PC-9 (cell line): ENCODE measurements at regions of chr4 and their contacts with region 1.

Region 1: GRCh38 chr4:25993395-25994185 is 79.6 kb downstream of the SMIM20 start:
- DNase-seq: no peak
- H3K4me3 ChIP-seq: no peak overlapping the region
- H3K27ac ChIP-seq: no peak overlapping the region
- H3K4me1 ChIP-seq: no peaks in the 10 kb centered on the region
- H3K27me3 ChIP-seq: no peaks in the 10 kb centered on the region
- CTCF ChIP-seq: peak; percentile 22; the same call in 1 of the 2 replicates

Region 2: GRCh38 chr4:25439918-25440477 is 553.6 kb before region 1 on chr4:
- CTCF ChIA-PET with region 1: no interaction called
- POLR2A ChIA-PET with region 1: no interaction called
- intact Hi-C with region 1: loop called (anchors 2 kb)
- DNase-seq: peak in 1 of 2 experiments; percentile 45
- H3K4me3 ChIP-seq: no peak overlapping the region
- H3K27ac ChIP-seq: no peak overlapping the region
- H3K4me1 ChIP-seq: no peaks in the 10 kb centered on the region
- H3K27me3 ChIP-seq: no peaks in the 10 kb centered on the region
- CTCF ChIP-seq: peak; percentile 87

Region 3: GRCh38 chr4:25531272-25531671 is 462.3 kb before region 1 on chr4:
- CTCF ChIA-PET with region 1: no interaction called
- POLR2A ChIA-PET with region 1: no interaction called
- intact Hi-C with region 1: no loop called
- DNase-seq: no peak
- H3K4me3 ChIP-seq: no peak overlapping the region
- H3K27ac ChIP-seq: no peak overlapping the region
- H3K4me1 ChIP-seq: no peaks in the 10 kb centered on the region
- H3K27me3 ChIP-seq: no peaks in the 10 kb centered on the region
- CTCF ChIP-seq: peak; percentile 63

Region 4: GRCh38 chr4:25563071-25563564 is 430.5 kb before region 1 on chr4:
- CTCF ChIA-PET with region 1: no interaction called
- POLR2A ChIA-PET with region 1: no interaction called
- intact Hi-C with region 1: no loop called
- DNase-seq: peak in 1 of 2 experiments; percentile 44
- H3K4me3 ChIP-seq: no peak overlapping the region
- H3K27ac ChIP-seq: no peak overlapping the region
- H3K4me1 ChIP-seq: no peaks in the 10 kb centered on the region
- H3K27me3 ChIP-seq: no peaks in the 10 kb centered on the region
- CTCF ChIP-seq: no peak

Region 5: GRCh38 chr4:26061248-26061986 is 67.8 kb after region 1 on chr4:
- CTCF ChIA-PET with region 1: no interaction called
- POLR2A ChIA-PET with region 1: no interaction called
- intact Hi-C with region 1: loop called (anchors 1 kb)
- DNase-seq: peak; percentile 31 to 41
- H3K4me3 ChIP-seq: no peak overlapping the region
- H3K27ac ChIP-seq: no peak overlapping the region
- H3K4me1 ChIP-seq: no peaks in the 10 kb centered on the region
- H3K27me3 ChIP-seq: no peaks in the 10 kb centered on the region
- CTCF ChIP-seq: peak; percentile 73

Region 6: GRCh38 chr4:26191353-26191752 is 197.8 kb after region 1 on chr4:
- CTCF ChIA-PET with region 1: no interaction called
- POLR2A ChIA-PET with region 1: interaction called, 12 read pairs
- intact Hi-C with region 1: no loop called
- DNase-seq: no peak
- H3K4me3 ChIP-seq: no peak overlapping the region
- H3K27ac ChIP-seq: no peak overlapping the region
- H3K4me1 ChIP-seq: peaks cover 4% of the 10 kb centered on the region; the same call in 1 of the 2 replicates
- H3K27me3 ChIP-seq: no peaks in the 10 kb centered on the region
- CTCF ChIP-seq: no peak

Region 7: GRCh38 chr4:26325191-26325590 is 331.6 kb after region 1 on chr4:
- CTCF ChIA-PET with region 1: no interaction called
- POLR2A ChIA-PET with region 1: no interaction called
- intact Hi-C with region 1: loop called (anchors 1 kb)
- DNase-seq: no peak
- H3K4me3 ChIP-seq: no peak overlapping the region
- H3K27ac ChIP-seq: no peak overlapping the region
- H3K4me1 ChIP-seq: peaks cover 23% of the 10 kb centered on the region; the same call in 1 of the 2 replicates
- H3K27me3 ChIP-seq: no peaks in the 10 kb centered on the region
- CTCF ChIP-seq: peak; percentile 50; the same call in 1 of the 2 replicates